Activated CD4-positive, alpha-beta memory T cell treated with anti-CD3 and anti-CD28 coated beads, Interleukin-2, amount 10 ng/mL, durations not matched to agents 7 days and 5 days (primary cell): ENCODE measurements at regions of chr1 and their contacts with region 1.

Region 1: GRCh38 chr1:38873027-38873969 is at the start of gene MYCBP:
- DNase-seq: peak; percentile 98
- H3K4me3 Mint-ChIP-seq: peak within 1 kb of the TSS; percentile 92
- H3K27ac Mint-ChIP-seq: peak within 1 kb of the TSS; percentile 81
- H3K4me1 Mint-ChIP-seq: peaks cover 43% of the 10 kb centered on the region
- H3K27me3 Mint-ChIP-seq: no peaks in the 10 kb centered on the region
- total RNA-seq, gene MYCBP: 55.3 to 60.7 TPM

Region 2: GRCh38 chr1:38783640-38784229 is 89.6 kb before region 1 on chr1:
- CTCF ChIA-PET with region 1: no interaction called
- POLR2A ChIA-PET with region 1: no interaction called
- DNase-seq: no peak
- H3K4me3 Mint-ChIP-seq: no peak overlapping the region
- H3K27ac Mint-ChIP-seq: no peak overlapping the region
- H3K4me1 Mint-ChIP-seq: no peaks in the 10 kb centered on the region
- H3K27me3 Mint-ChIP-seq: peaks cover 61% of the 10 kb centered on the region

Region 3: GRCh38 chr1:38859561-38860453 is 13.5 kb before region 1 on chr1 and contains the start of gene RRAGC:
- CTCF ChIA-PET with region 1: interaction called, 3 read pairs
- POLR2A ChIA-PET with region 1: interaction called, 17 read pairs
- DNase-seq: peak; percentile 99
- H3K4me3 Mint-ChIP-seq: peak within 1 kb of the TSS; percentile 81
- H3K27ac Mint-ChIP-seq: peak within 1 kb of the TSS; percentile 79
- H3K4me1 Mint-ChIP-seq: peaks cover 44% of the 10 kb centered on the region
- H3K27me3 Mint-ChIP-seq: no peaks in the 10 kb centered on the region
- total RNA-seq, gene RRAGC: 20.6 to 21.0 TPM